A549 (cell line): ENCODE measurements at regions of chr1 and their contacts with region 1.

Region 1: GRCh38 chr1:34865981-34866761 is 6.6 kb upstream of the SMIM12 start:
- DNase-seq: peak; percentile 71 to 75
- ATAC-seq: peak; percentile 75 to 89
- H3K4me3 ChIP-seq: peak overlapping the region; percentile 50
- H3K27ac ChIP-seq: peak overlapping the region; percentile 72 to 91
- H3K4me1 ChIP-seq: 0 out of 3 replicates have a peak, but pooled peaks cover 3% of the 10 kb centered on the region
- CTCF ChIP-seq: peak; percentile 88
- EP300 ChIP-seq: no peak
- POLR2A ChIP-seq: no peak
- RAD21 ChIP-seq: peak; percentile 27 to 40; a peak in 2 of 5 replicates

Region 2: DNA sequence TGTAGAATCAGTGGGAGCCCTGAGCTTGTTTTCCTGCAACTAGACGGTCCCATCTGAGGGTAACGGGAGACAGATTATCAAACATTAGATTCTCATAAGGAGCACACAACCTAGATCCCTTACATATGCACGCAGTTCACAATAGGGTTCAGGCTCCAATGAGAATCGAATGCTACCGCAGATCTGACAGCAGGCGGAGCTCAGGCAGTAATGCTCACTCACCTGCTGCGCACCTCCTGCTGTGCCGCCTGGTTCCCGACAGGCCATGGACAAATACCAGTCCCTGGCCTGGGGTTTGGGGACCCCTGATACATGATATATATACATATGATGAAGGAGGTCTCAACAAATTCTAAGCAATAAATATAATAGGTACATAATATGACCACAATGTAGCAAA is 13.1 kb after region 1 on chr1:
- CTCF ChIA-PET with region 1: interaction called, 20 read pairs
- POLR2A ChIA-PET with region 1: no interaction called
- DNase-seq: no peak
- ATAC-seq: no peak
- H3K4me3 ChIP-seq: no peak overlapping the region
- H3K27ac ChIP-seq: no peak overlapping the region
- H3K4me1 ChIP-seq: no peaks in the 10 kb centered on the region
- CTCF ChIP-seq: no peak
- EP300 ChIP-seq: no peak
- POLR2A ChIP-seq: no peak
- RAD21 ChIP-seq: no peak

Region 3: DNA sequence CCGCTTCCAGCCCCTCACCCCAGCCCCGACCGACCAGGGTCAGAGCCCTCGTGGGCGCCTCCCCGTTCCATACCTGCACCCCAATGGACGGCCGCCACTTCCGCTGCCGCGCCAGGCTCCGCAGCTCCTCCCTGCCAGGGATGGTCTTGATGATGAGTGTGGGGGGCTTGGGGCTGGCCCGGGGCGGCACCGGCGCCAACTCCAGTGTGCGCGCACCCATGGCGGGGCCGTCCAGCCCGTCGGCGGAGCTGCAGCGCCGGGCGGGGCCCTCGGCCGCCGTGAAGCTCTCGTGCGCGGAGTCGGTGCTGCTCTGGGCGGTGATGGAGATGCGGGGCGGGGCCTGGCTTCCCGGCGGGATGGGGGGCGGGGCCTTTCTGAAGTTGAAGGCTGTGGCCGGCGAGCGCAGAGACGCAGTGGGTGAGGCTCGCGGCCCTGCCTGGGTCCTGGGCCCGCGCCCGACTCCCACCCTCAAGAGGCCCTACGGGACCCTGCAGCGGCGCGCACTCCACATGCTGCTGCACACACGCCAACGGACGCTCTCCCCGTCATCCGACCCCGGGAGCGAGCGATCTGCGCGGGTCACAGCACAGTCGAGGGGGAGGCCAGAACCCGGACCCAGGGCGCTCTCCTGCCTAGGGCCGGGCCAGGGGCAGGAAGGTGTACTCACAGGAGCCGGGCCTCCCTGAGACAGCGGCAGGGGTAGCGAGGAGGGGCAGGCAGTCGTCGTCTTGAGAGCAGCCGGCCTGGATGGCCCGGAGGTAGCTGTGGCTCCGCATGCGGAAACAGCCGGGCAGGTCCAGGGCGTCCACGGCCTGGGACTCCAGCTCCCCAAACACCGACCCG is 19.5 kb after region 1 on chr1:
- CTCF ChIA-PET with region 1: interaction called, 20 read pairs
- POLR2A ChIA-PET with region 1: no interaction called
- DNase-seq: peak in 1 of 2 experiments; percentile 15
- ATAC-seq: peak; percentile 73 to 86
- H3K4me3 ChIP-seq: peak overlapping the region; percentile 45
- H3K27ac ChIP-seq: no peak overlapping the region
- H3K4me1 ChIP-seq: no peaks in the 10 kb centered on the region
- CTCF ChIP-seq: no peak
- EP300 ChIP-seq: no peak
- POLR2A ChIP-seq: no peak
- RAD21 ChIP-seq: no peak

Region 4: DNA sequence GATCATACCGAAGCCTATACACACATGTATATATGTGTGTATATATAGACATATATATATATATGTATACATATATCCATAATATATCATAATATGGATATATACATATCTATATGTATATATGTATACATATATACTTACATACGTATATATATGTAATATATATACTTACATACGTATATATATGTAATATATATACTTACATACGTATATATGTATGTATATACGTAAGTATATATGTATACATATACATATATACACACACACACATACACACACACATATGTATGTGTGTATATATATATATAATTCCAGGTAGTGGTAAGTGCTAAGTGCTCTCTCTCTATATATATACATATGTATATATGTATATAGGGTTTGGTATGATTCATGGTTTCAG is 128.7 kb after region 1 on chr1:
- CTCF ChIA-PET with region 1: no interaction called
- POLR2A ChIA-PET with region 1: no interaction called
- DNase-seq: no peak
- ATAC-seq: no peak
- H3K4me3 ChIP-seq: no peak overlapping the region
- H3K27ac ChIP-seq: no peak overlapping the region
- H3K4me1 ChIP-seq: no peaks in the 10 kb centered on the region
- CTCF ChIP-seq: no peak
- EP300 ChIP-seq: no peak
- POLR2A ChIP-seq: no peak
- RAD21 ChIP-seq: no peak